Activated CD4-positive, alpha-beta T cell treated with anti-CD3 and anti-CD28 coated beads for 36 hours (primary cell): ENCODE measurements at regions of chr2 and their contacts with region 1.

Region 1: DNA sequence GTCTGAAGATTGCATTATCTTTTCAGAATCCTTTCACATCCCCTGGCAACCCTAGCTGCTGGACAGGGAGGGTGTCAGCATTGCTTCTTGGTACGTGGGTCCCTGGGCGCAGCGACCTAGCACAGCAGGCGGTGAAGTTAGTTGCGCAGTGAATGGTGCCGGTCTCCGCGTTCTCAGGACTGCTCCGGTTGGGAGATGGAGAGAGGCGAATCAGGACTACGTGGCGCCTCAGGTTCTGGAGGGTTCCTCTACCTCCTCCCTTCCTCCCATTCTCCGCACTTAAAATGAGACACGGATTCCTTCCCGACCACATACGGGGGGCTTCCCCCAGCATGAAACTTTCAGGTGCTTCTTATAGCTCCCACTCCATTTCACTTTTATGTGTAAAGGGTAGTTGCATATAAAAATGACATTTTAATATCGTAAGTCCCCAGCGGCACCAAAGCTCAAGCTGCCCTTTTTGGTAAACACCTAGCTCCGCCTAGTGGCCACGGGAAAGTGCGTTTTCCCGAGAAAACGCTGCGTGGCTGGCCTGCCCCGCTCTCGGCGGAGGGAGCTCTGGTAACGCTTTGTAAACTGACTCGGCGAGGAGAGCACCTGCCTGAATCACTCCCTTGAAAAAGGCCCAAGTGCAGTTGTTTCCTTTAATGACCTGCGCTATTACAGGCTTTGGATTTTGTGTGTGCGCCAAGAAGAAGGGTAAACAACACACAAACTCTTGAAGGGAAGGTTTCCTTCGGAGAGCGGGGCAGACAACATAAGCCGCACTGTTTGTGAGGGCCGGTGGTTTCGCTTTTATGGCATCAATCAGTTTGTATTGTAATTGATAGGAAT is 32.9 kb upstream of the INHBB start:
- DNase-seq: peak; percentile 90
- ATAC-seq: peak; percentile 83
- H3K4me3 Mint-ChIP-seq: peak overlapping the region; percentile 53
- H3K27ac Mint-ChIP-seq: peak overlapping the region; percentile 29
- H3K4me1 Mint-ChIP-seq: peaks cover 26% of the 10 kb centered on the region
- H3K27me3 Mint-ChIP-seq: no peaks in the 10 kb centered on the region

Region 2: GRCh38 chr2:119702918-119703401 is 610.1 kb before region 1 on chr2:
- CTCF ChIA-PET with region 1: no interaction called
- POLR2A ChIA-PET with region 1: no interaction called
- intact Hi-C with region 1: loop called in 1 of 2 experiments (anchors 2 kb)
- DNase-seq: peak; percentile 82
- ATAC-seq: peak; percentile 81
- H3K4me3 Mint-ChIP-seq: no peak overlapping the region
- H3K27ac Mint-ChIP-seq: no peak overlapping the region
- H3K4me1 Mint-ChIP-seq: peaks cover 21% of the 10 kb centered on the region
- H3K27me3 Mint-ChIP-seq: no peaks in the 10 kb centered on the region

Region 3: GRCh38 chr2:120109186-120110061 is 203.7 kb before region 1 on chr2:
- CTCF ChIA-PET with region 1: interaction called, 25 read pairs
- POLR2A ChIA-PET with region 1: no interaction called
- intact Hi-C with region 1: loop called (anchors 1 to 2 kb)
- DNase-seq: no peak
- ATAC-seq: peak; percentile 78
- H3K4me3 Mint-ChIP-seq: peak overlapping the region; percentile 3
- H3K27ac Mint-ChIP-seq: peak overlapping the region; percentile 88
- H3K4me1 Mint-ChIP-seq: peaks cover 28% of the 10 kb centered on the region
- H3K27me3 Mint-ChIP-seq: no peaks in the 10 kb centered on the region

Region 4: GRCh38 chr2:120223034-120223912 is 89.8 kb before region 1 on chr2 and contains the start of gene TMEM185B:
- CTCF ChIA-PET with region 1: interaction called, 8 read pairs
- POLR2A ChIA-PET with region 1: no interaction called
- intact Hi-C with region 1: loop called in 1 of 2 experiments (anchors 1 kb)
- DNase-seq: peak; percentile 95
- ATAC-seq: peak; percentile 90
- H3K4me3 Mint-ChIP-seq: peak within 1 kb of the TSS; percentile 76
- H3K27ac Mint-ChIP-seq: peak within 1 kb of the TSS; percentile 93
- H3K4me1 Mint-ChIP-seq: peaks cover 50% of the 10 kb centered on the region
- H3K27me3 Mint-ChIP-seq: no peaks in the 10 kb centered on the region
- total RNA-seq, gene TMEM185B: 15.9 to 17.3 TPM

Region 5: GRCh38 chr2:120252225-120253021 is 60.7 kb before region 1 on chr2 and contains the start of gene RALB:
- CTCF ChIA-PET with region 1: interaction called, 20 read pairs
- POLR2A ChIA-PET with region 1: interaction called, 3 read pairs
- intact Hi-C with region 1: loop called in 1 of 2 experiments (anchors 1 kb)
- DNase-seq: peak; percentile 100
- ATAC-seq: peak; percentile 95
- H3K4me3 Mint-ChIP-seq: peak within 1 kb of the TSS; percentile 92
- H3K27ac Mint-ChIP-seq: peak within 1 kb of the TSS; percentile 86
- H3K4me1 Mint-ChIP-seq: peaks cover 41% of the 10 kb centered on the region
- H3K27me3 Mint-ChIP-seq: peaks cover 6% of the 10 kb centered on the region
- total RNA-seq, gene RALB: 34.0 to 34.3 TPM

Region 6: DNA sequence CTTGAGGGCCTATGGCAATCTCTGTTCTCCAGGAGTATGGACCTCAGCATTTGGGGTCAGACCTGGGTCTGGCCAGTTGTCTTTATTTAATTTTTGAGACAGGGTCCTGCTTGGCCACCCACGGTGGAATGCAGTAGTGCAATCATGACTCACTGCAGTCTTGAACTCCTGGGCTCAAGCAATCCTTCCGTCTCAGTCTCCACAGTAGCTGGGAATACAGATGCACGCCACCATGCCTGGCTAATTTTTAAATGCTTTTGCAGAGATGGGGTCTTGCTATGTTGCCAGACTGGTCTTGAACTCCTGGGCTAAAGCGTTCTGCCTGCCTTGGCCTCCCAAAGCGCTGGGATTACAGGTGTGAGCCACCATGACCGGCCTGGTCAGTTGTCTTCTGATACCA is 13.5 kb before region 1 on chr2:
- CTCF ChIA-PET with region 1: interaction called, 29 read pairs
- POLR2A ChIA-PET with region 1: no interaction called
- intact Hi-C with region 1: no loop called
- DNase-seq: no peak
- ATAC-seq: no peak
- H3K4me3 Mint-ChIP-seq: no peak overlapping the region
- H3K27ac Mint-ChIP-seq: no peak overlapping the region
- H3K4me1 Mint-ChIP-seq: no peaks in the 10 kb centered on the region
- H3K27me3 Mint-ChIP-seq: no peaks in the 10 kb centered on the region

Region 7: GRCh38 chr2:120486441-120487378 is 173.6 kb after region 1 on chr2:
- CTCF ChIA-PET with region 1: no interaction called
- POLR2A ChIA-PET with region 1: no interaction called
- intact Hi-C with region 1: no loop called
- DNase-seq: no peak
- ATAC-seq: no peak
- H3K4me3 Mint-ChIP-seq: no peak overlapping the region
- H3K27ac Mint-ChIP-seq: no peak overlapping the region
- H3K4me1 Mint-ChIP-seq: no peaks in the 10 kb centered on the region
- H3K27me3 Mint-ChIP-seq: peaks cover 3% of the 10 kb centered on the region